AG04449 (cell line): ENCODE measurements at regions of chr6 and their contacts with region 1.

Region 1: GRCh38 chr6:154805288-154805911 is 72.2 kb downstream of the SCAF8 start:
- DNase-seq: no peak
- H3K4me3 ChIP-seq: no peak overlapping the region
- CTCF ChIP-seq: peak; percentile 19

Region 2: GRCh38 chr6:154092326-154092962 is 713.0 kb before region 1 on chr6:
- CTCF ChIA-PET with region 1: no interaction called
- POLR2A ChIA-PET with region 1: no interaction called
- DNase-seq: no peak
- H3K4me3 ChIP-seq: no peak overlapping the region
- CTCF ChIP-seq: no peak

Region 3: GRCh38 chr6:154580401-154581135 is 224.8 kb before region 1 on chr6:
- CTCF ChIA-PET with region 1: no interaction called
- POLR2A ChIA-PET with region 1: no interaction called
- DNase-seq: no peak
- H3K4me3 ChIP-seq: no peak overlapping the region
- CTCF ChIP-seq: no peak

Region 4: GRCh38 chr6:154683756-154684523 is 121.5 kb before region 1 on chr6:
- CTCF ChIA-PET with region 1: interaction called, 16 read pairs
- POLR2A ChIA-PET with region 1: no interaction called
- DNase-seq: peak; percentile 4
- H3K4me3 ChIP-seq: no peak overlapping the region
- CTCF ChIP-seq: no peak

Region 5: GRCh38 chr6:154705471-154706113 is 99.8 kb before region 1 on chr6:
- CTCF ChIA-PET with region 1: interaction called, 11 read pairs
- POLR2A ChIA-PET with region 1: no interaction called
- DNase-seq: no peak
- H3K4me3 ChIP-seq: no peak overlapping the region
- CTCF ChIP-seq: no peak

Region 6: DNA sequence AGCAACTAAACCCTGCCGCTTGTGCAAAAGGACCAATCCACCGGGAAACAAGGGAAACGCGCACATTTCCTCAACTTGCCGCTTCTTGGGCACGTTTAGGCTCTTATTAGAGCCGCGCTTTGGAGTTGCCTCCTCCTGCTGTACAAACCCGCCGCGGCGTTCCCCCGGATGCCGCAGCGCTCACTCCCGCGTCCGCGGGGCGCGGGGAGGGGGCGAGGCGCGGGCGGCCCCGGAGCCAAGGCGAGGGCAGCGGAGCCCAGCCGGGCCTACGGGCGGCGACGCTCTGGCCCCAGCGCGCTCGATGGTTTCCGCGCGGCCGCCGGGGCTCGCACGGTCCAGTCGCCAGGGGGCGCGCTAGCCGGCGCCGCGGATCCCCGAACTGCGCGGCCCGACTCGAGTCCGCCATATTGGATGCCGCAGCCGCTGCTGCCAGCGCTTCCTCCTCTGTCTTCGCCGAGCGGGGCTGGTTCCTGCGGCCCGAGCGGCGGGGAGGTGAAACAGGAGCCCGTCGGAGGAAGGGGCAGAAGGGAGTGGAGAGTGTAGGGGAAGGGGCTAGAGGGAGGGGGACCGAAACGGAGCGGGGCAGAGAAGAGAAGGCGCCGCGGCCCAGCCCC is 72.3 kb before region 1 on chr6 and contains the start of gene SCAF8:
- CTCF ChIA-PET with region 1: interaction called, 10 read pairs
- POLR2A ChIA-PET with region 1: no interaction called
- DNase-seq: no peak
- H3K4me3 ChIP-seq: peak within 1 kb of the TSS; percentile 85
- CTCF ChIP-seq: peak; percentile 76

Region 7: DNA sequence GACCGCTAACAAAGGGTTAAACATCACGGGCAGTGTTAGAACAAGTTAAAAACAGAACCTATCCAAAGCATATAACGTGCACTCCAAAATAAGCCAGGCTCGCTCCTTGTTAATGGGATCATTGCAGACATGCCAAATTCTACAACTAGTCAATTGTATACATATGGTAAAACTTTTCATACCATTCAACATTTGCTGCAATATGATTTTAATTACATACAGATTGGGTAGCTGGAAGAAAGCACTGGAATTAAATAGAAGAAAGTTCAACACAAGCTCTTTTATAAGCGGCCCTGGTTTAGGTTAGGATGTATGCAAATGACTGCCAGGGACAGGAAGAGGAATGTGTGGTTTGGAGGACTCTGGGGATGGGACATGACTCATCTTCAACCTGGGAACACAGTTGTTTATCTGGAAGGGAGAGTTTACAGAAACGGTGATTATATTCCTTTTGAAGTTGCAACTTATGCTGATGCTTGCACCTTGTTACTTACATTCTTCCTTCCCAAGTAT is 127.2 kb after region 1 on chr6:
- CTCF ChIA-PET with region 1: no interaction called
- POLR2A ChIA-PET with region 1: no interaction called
- DNase-seq: peak; percentile 37
- H3K4me3 ChIP-seq: no peak overlapping the region
- CTCF ChIP-seq: no peak

Region 8: GRCh38 chr6:155162672-155163071 is 357.3 kb after region 1 on chr6:
- CTCF ChIA-PET with region 1: no interaction called
- POLR2A ChIA-PET with region 1: no interaction called
- DNase-seq: no peak
- H3K4me3 ChIP-seq: no peak overlapping the region
- CTCF ChIP-seq: no peak